ENCODE measurements at regions of chr2 and their contacts with region 1.

Region 1: DNA sequence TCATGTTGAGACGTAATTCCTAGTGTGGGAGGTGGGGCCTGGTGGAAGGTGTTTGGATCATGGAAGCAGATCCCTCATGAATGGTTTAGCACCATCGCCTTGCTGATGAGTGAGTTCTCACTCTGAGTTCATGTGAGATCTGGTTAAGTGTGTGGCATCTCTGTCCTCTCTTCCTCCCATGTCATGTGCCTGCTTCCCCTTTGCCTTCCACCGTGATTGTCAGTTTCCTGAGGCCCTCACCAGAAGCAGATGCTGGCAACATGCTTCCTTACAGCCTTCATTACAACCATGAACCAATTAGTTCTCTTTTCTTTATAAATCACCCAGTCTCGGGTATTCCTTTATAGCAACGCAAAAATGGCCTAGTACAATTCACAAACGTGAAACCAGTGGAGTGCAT is 14.6 kb upstream of the MCM6 start:
- DNase-seq: no peak
- ATAC-seq: no peak
- H3K4me3 Mint-ChIP-seq: no peak overlapping the region
- H3K27ac Mint-ChIP-seq: no peak overlapping the region
- H3K4me1 Mint-ChIP-seq: peaks cover 21% of the 10 kb centered on the region
- H3K27me3 Mint-ChIP-seq: no peaks in the 10 kb centered on the region

Region 2: GRCh38 chr2:135876066-135876711 is 14.6 kb before region 1 on chr2 and contains the start of gene MCM6:
- POLR2A ChIA-PET with region 1: interaction called, 15 read pairs
- DNase-seq: peak; percentile 96
- ATAC-seq: peak; percentile 90
- H3K4me3 Mint-ChIP-seq: peak within 1 kb of the TSS; percentile 94
- H3K27ac Mint-ChIP-seq: peak within 1 kb of the TSS; percentile 95
- H3K4me1 Mint-ChIP-seq: peaks cover 37% of the 10 kb centered on the region
- H3K27me3 Mint-ChIP-seq: no peaks in the 10 kb centered on the region
- total RNA-seq, gene MCM6: 107 to 109 TPM

Measured in activated naive CD8-positive, alpha-beta T cell treated with anti-CD3 and anti-CD28 coated beads, Interleukin-2, amount 10 ng/mL, durations not matched to agents 7 days and 5 days (primary cell).